ENCODE measurements at regions of chr3 and their contacts with region 1.

Region 1: DNA sequence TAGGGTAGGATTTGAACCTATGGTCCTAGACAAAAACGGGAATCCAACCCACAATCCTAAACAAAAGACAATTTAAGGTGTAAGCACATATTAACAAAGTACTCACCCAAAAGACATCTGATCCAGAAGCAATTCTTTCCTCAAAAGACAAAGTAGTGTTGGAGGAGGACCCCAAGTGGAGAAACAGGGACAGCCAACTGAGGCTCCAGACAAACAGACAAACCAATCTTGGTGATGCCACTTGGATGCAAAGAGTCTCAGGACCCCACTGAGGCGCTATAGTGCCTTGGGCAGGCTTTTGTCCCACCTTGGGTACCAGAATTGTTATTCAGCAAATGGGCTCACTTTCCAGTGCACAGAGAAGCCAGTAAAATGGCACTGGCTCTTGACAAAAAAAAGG is 613.8 kb downstream of the DIPK2A start:
- DNase-seq: no peak
- CTCF ChIP-seq: no peak

Region 2: GRCh38 chr3:144415492-144416170 is 169.8 kb before region 1 on chr3:
- CTCF ChIA-PET with region 1: no interaction called
- POLR2A ChIA-PET with region 1: no interaction called
- DNase-seq: no peak
- CTCF ChIP-seq: no peak

Region 3: DNA sequence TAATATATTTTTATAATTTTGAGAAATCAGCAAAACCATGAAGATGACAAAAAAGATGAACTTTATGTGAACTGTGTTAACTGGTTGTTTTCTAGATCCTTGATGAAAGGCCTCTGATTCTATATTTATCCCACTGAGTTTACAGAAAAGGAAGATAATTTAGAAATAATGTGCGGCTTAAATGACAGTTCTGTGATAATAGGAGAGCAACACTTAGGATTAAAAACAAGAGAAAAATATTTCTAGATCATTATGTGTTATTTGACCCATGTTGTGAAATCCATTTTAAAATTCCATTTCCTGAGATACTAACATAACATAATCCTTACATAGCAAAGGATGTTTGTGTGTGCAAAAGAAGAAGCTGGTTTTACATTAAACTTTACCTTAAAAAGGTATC is 15.7 kb before region 1 on chr3:
- CTCF ChIA-PET with region 1: interaction called, 10 read pairs
- POLR2A ChIA-PET with region 1: no interaction called
- DNase-seq: no peak
- CTCF ChIP-seq: no peak

Measured in GM10248 (cell line).